ENCODE measurements at regions of chr3 and their contacts with region 1.

Region 1: DNA sequence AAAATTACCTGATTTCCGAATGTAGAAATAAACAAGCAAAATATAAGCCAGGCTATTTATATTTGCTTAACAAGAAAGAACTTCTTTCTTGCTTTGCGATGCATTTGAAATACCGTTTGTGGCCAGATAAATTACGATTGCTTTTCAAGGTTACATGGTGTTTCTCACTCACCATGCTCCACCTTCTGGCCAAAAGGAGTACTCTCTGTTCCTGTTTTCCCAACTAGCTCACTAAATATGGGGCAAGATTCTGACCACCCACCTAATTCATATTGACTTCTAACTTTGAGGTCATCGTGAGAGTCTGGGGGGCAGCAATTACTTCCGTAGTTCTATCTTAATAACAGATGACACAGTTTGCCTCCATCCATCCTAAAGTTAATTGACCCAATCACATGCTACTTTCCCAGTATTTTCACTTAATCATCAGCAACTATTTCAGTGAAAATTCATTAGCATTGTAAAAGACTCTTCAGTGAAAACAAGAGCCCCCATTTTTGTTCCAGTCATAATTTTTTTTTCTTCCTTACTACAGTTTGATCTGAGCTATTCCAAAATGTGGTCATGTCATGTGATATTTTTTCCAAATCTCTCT is 25.9 kb downstream of the ACP3 start:
- DNase-seq: peak; percentile 46 to 65 (median 63)
- H3K4me3 ChIP-seq: peak overlapping the region; percentile 18 to 62 (median 31)
- H3K4me3 Mint-ChIP-seq: peak overlapping the region; percentile 20 to 73
- H3K27ac ChIP-seq: peak overlapping the region in 1 of 2 donors; percentile 50
- H3K27ac Mint-ChIP-seq: peak overlapping the region in 4 of 7 donors; percentile 30 to 82 (median 40)
- H3K4me1 ChIP-seq: peaks cover 8 to 12% of the 10 kb centered on the region in 2 donors
- H3K4me1 Mint-ChIP-seq: peaks cover 17% of the 10 kb centered on the region
- H3K27me3 ChIP-seq: no peaks in the 10 kb centered on the region
- H3K27me3 Mint-ChIP-seq: peaks cover 0 to 2% (median 0%) of the 10 kb centered on the region in 3 donors
- CTCF ChIP-seq: peak; percentile 90

Region 2: DNA sequence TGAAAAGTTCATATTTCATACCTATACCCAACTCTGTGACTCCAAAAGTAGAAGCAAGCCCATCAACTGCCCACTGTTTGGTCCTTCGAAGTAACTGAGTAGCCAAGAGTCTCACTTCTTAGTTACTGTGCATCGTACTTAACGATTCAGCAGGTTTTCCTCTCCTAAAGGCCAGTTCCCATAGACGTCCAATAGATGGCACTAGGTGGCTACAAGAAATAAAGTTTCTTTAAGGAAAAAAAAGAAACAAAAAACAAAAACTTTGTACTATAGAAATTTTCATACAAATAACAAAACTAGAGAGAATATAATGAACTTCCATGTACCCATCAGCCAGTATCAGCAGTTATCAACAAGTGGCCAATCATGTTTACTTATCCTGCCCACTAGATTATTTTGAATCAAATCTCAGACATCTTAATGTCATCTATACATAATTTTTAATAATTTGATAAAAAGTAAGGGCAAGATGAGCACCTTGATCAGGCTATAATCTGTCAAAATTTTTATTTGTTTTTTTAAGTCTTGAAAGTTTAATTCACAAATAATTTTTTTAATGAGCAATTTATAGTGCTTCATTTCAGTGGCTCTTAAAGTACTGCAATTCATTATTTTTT is 89.7 kb before region 1 on chr3:
- intact Hi-C with region 1: loop called (anchors 2 kb)
- DNase-seq: peak; percentile 46 to 68 (median 61)
- H3K4me3 ChIP-seq: no peak overlapping the region
- H3K4me3 Mint-ChIP-seq: no peak overlapping the region
- H3K27ac ChIP-seq: no peak overlapping the region
- H3K27ac Mint-ChIP-seq: no peak overlapping the region
- H3K4me1 ChIP-seq: peaks cover 0 to 2% of the 10 kb centered on the region in 2 donors
- H3K4me1 Mint-ChIP-seq: peaks cover 22% of the 10 kb centered on the region
- H3K27me3 ChIP-seq: no peaks in the 10 kb centered on the region
- H3K27me3 Mint-ChIP-seq: no peaks in the 10 kb centered on the region
- CTCF ChIP-seq: peak; percentile 86